ENCODE measurements at regions of chr10 and their contacts with region 1.

Region 1: DNA sequence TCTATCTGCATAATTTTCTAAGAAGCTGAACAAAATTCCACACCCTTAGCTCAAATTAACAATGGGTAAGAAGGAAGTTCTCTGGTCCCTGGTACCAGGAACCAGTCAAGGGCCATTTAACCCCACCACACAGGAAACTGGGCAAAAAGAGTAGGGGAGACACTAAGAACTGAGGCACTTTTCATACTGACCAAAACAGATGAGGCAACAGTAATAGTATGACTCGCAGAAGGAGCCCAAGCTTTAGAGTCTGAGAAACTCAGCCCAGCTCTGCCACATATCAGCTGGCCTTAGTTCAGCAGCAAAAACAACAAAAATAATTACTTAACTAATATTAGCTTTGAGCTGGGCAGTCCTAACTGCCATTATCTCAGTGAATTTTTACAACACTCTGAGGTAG is 221.2 kb downstream of the FAM107B start:
- DNase-seq: peak; percentile 62 to 78 (median 74)
- H3K4me3 ChIP-seq: peak overlapping the region in 1 of 3 experiments; percentile 39
- H3K4me3 Mint-ChIP-seq: peak overlapping the region in 1 of 2 donors; percentile 66
- H3K27ac ChIP-seq: peak overlapping the region; percentile 82 to 100
- H3K27ac Mint-ChIP-seq: peak overlapping the region; percentile 96 to 100 (median 98)
- H3K4me1 ChIP-seq: peaks cover 82 to 99% of the 10 kb centered on the region in 2 donors
- H3K4me1 Mint-ChIP-seq: peaks cover 92% of the 10 kb centered on the region
- H3K27me3 ChIP-seq: no peaks in the 10 kb centered on the region
- H3K27me3 Mint-ChIP-seq: peaks cover 0 to 1% (median 0%) of the 10 kb centered on the region in 3 donors
- CTCF ChIP-seq: no peak

Region 2: GRCh38 chr10:14598809-14599764 is 45.6 kb after region 1 on chr10:
- intact Hi-C with region 1: loop called in 1 of 2 experiments (anchors 5 kb)
- DNase-seq: no peak
- H3K4me3 ChIP-seq: no peak overlapping the region
- H3K4me3 Mint-ChIP-seq: no peak overlapping the region
- H3K27ac ChIP-seq: peak overlapping the region in 1 of 2 donors; percentile 16
- H3K27ac Mint-ChIP-seq: peak overlapping the region in 6 of 7 donors; percentile 10 to 84 (median 64)
- H3K4me1 ChIP-seq: peaks cover 30 to 33% of the 10 kb centered on the region in 2 donors
- H3K4me1 Mint-ChIP-seq: peaks cover 65% of the 10 kb centered on the region
- H3K27me3 ChIP-seq: no peaks in the 10 kb centered on the region
- H3K27me3 Mint-ChIP-seq: peaks cover 0 to 3% (median 0%) of the 10 kb centered on the region in 3 donors
- CTCF ChIP-seq: no peak

Region 3: DNA sequence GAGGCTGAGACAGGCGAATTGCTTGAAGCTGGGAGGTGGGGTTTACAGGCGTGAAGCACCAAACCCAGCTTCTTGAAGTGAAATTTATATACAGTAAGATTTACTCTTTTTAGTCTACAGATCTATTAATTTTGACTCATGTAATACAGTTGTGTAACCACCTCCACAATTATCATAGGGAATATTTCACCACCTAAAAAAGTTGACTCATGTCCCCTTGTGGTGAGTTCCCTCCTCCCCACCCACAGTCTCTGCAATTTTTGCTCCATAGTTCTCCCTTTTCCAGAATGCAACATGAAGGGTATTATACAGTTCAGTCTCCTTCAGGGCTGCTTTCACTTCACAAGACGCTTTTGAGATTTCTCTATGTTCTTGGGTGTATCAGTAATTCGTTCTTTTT is 64.4 kb after region 1 on chr10:
- intact Hi-C with region 1: loop called in 1 of 2 experiments (anchors 5 kb)
- DNase-seq: peak; percentile 88 to 97 (median 93)
- H3K4me3 ChIP-seq: peak overlapping the region in 1 of 3 experiments; percentile 35
- H3K4me3 Mint-ChIP-seq: peak overlapping the region; percentile 65 to 81
- H3K27ac ChIP-seq: peak overlapping the region; percentile 87 to 88
- H3K27ac Mint-ChIP-seq: peak overlapping the region; percentile 98 to 100 (median 99)
- H3K4me1 ChIP-seq: peaks cover 58 to 66% of the 10 kb centered on the region in 2 donors
- H3K4me1 Mint-ChIP-seq: peaks cover 59% of the 10 kb centered on the region
- H3K27me3 ChIP-seq: no peaks in the 10 kb centered on the region
- H3K27me3 Mint-ChIP-seq: peaks cover 0 to 1% (median 0%) of the 10 kb centered on the region in 3 donors
- CTCF ChIP-seq: peak; percentile 15

Region 4: DNA sequence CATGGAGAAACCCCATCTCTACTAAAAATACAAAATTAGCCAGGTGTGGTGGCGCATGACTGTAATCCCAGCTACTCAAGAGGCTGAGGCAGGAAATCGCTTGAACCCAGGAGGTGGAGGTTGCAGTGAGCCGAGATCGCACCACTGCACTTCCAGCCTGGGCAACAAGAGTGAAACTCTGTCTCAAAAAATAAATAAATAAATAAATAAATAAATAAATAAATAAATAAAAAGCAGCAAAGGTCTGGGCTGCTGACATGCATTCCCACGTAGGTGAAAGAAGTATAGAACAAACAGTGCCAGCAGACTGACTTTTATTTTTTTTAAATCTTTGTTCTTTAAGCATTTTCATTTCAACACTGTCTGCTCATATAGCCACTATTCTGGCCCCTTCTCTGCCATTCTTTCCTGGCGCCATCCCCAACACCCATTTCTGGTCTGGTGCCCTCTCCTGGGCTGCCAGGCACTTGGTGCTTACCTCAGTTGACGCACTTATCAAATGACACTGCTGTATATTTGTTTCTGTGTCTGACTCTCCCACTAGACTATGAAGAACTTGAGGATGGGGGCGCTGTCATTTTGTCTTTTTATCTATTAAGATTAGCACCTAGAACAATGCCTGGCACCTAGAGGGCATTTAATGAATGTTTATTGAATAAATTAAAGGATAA is 205.7 kb after region 1 on chr10:
- intact Hi-C with region 1: no loop called
- DNase-seq: no peak
- H3K4me3 ChIP-seq: no peak overlapping the region
- H3K4me3 Mint-ChIP-seq: no peak overlapping the region
- H3K27ac ChIP-seq: no peak overlapping the region
- H3K27ac Mint-ChIP-seq: no peak overlapping the region
- H3K4me1 ChIP-seq: peaks cover 16 to 20% of the 10 kb centered on the region in 2 donors
- H3K4me1 Mint-ChIP-seq: peaks cover 18% of the 10 kb centered on the region
- H3K27me3 ChIP-seq: no peaks in the 10 kb centered on the region
- H3K27me3 Mint-ChIP-seq: peaks cover 0 to 3% (median 2%) of the 10 kb centered on the region in 3 donors
- CTCF ChIP-seq: no peak